MCF 10A (cell line): ENCODE measurements at regions of chr11 and their contacts with region 1.

Region 1: DNA sequence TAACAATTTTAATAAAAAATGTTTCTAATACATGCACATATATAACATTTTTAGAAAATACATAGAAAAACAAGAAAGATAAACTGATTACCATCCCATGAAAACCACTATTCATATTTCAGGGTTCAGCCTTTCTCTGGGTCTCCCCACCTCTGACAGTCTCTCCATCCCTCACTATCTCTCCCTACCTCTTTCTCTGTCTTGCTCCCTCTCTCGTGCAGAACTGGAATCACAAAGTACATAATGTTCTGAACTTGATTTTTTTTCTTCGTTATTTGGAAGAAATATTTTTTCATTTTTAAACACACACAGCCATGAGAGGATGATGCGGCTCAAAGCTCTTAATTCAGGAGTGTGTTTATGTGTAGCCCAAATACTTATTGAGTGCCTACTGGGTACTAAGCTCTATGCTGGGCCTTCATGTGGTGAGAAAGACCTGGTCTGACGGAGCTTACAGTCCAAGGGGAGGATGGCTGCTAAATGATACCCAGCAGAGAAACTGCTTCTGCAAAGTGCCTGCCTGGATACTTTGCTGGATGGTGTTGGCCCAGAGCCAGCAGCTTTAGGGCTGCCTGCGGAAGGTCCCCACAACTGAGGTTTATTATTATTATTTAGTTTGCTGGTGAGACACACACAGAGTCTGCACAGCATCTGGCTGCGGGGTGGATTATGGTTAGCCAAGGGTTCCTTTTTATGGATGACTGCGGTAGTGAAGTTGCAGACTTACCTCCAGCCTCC is 42.6 kb downstream of the SC5D start:
- DNase-seq: no peak
- H3K4me3 Mint-ChIP-seq: no peak overlapping the region
- H3K27ac Mint-ChIP-seq: no peak overlapping the region
- H3K4me1 Mint-ChIP-seq: no peaks in the 10 kb centered on the region
- H3K27me3 Mint-ChIP-seq: peaks cover 37% of the 10 kb centered on the region
- CTCF ChIP-seq: no peak

Region 2: DNA sequence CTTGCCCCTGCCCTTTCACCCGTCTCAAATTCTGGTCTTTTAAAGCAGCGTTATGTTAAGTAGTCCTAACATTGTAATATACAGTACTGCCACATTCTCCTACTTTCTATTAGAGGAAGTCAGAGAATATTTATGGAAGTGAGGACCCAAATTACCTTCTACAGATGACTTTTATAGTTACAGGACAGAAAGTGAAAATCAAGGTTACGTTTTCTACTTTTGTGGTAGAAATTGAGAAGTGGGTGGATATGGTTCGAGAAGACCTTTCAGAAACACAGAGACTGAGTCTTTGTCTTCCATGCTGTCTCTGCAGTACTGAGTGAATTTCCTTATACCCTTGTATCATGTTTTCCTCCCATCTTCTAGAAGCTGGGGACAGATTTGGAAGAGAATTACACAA is 25.5 kb before region 1 on chr11:
- CTCF ChIA-PET with region 1: no interaction called
- POLR2A ChIA-PET with region 1: no interaction called
- intact Hi-C with region 1: no loop called
- DNase-seq: no peak
- H3K4me3 Mint-ChIP-seq: no peak overlapping the region
- H3K27ac Mint-ChIP-seq: no peak overlapping the region
- H3K4me1 Mint-ChIP-seq: no peaks in the 10 kb centered on the region
- H3K27me3 Mint-ChIP-seq: no peaks in the 10 kb centered on the region
- CTCF ChIP-seq: no peak

Region 3: GRCh38 chr11:121383716-121384115 is 48.6 kb after region 1 on chr11:
- CTCF ChIA-PET with region 1: no interaction called
- POLR2A ChIA-PET with region 1: no interaction called
- intact Hi-C with region 1: no loop called
- DNase-seq: no peak
- H3K4me3 Mint-ChIP-seq: no peak overlapping the region
- H3K27ac Mint-ChIP-seq: no peak overlapping the region
- H3K4me1 Mint-ChIP-seq: no peaks in the 10 kb centered on the region
- H3K27me3 Mint-ChIP-seq: peaks cover 26% of the 10 kb centered on the region
- CTCF ChIP-seq: no peak

Region 4: GRCh38 chr11:121421159-121421901 is 86.2 kb after region 1 on chr11:
- CTCF ChIA-PET with region 1: no interaction called
- POLR2A ChIA-PET with region 1: no interaction called
- intact Hi-C with region 1: loop called (anchors 5 kb)
- DNase-seq: peak; percentile 23
- H3K4me3 Mint-ChIP-seq: no peak overlapping the region
- H3K27ac Mint-ChIP-seq: no peak overlapping the region
- H3K4me1 Mint-ChIP-seq: peaks cover 18% of the 10 kb centered on the region
- H3K27me3 Mint-ChIP-seq: peaks cover 16% of the 10 kb centered on the region
- CTCF ChIP-seq: no peak

Region 5: GRCh38 chr11:121464352-121464946 is 129.3 kb after region 1 on chr11:
- CTCF ChIA-PET with region 1: no interaction called
- POLR2A ChIA-PET with region 1: no interaction called
- intact Hi-C with region 1: no loop called
- DNase-seq: peak; percentile 92
- H3K4me3 Mint-ChIP-seq: peak overlapping the region; percentile 52
- H3K27ac Mint-ChIP-seq: no peak overlapping the region
- H3K4me1 Mint-ChIP-seq: peaks cover 43% of the 10 kb centered on the region
- H3K27me3 Mint-ChIP-seq: no peaks in the 10 kb centered on the region
- CTCF ChIP-seq: no peak